ENCODE measurements at regions of chr12 and their contacts with region 1.

Region 1: GRCh38 chr12:8949342-8950220 is at the start of gene M6PR:
- DNase-seq: peak; percentile 96 to 98
- ATAC-seq: peak; percentile 95 to 96
- H3K4me3 ChIP-seq: peak within 1 kb of the TSS; percentile 100
- H3K27ac ChIP-seq: peak within 1 kb of the TSS; percentile 90 to 93
- H3K4me1 ChIP-seq: peaks cover 19% of the 10 kb centered on the region
- CTCF ChIP-seq: peak; percentile 44
- EP300 ChIP-seq: no peak
- POLR2A ChIP-seq: peak; percentile 92
- RAD21 ChIP-seq: peak; percentile 52 to 60; a peak in 4 of 5 replicates
- polyA plus RNA-seq, gene M6PR: 162 and 227 TPM in 2 replicates

Region 2: DNA sequence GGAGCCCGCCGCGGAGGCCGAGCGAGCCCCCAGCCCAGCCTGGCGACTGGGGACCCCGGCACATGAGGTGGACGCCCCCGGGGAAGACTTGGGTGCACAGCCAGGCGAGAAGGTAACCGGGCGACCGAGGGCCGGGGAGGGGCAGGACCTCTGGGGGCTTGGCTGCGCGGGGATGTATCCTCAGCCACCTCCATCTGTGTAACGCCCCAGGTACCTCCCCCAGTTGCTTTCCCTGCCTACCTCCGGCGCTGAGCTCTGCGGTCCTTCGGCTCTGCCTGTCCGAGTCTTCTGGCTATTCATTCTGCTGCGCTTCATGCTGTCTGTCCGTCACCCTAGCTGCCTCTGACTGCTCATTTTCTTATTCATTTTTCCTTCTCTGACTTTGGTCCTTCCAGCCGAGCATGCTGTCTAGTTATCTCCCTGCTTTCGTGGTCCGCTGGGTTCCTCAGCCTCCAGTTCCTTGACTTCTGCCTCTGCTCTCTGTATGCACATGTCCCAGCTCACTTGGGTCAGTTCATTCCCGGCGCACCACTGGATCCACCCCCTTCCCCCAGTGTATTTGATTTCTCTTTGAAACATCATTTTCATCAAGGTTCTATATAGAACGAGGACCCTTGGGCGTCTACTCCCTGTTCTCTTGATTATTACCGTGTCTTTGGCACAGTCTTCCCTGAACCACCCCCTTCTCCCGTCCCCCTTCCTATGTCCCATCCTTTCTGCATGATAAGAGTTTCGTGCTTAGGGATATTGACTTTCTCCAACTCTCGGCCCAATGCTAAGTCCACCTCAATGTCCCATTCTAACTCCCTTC is 34.7 kb before region 1 on chr12:
- CTCF ChIA-PET with region 1: interaction called, 4 read pairs
- POLR2A ChIA-PET with region 1: interaction called, 22 read pairs
- DNase-seq: peak; percentile 70 to 71
- ATAC-seq: peak; percentile 92 to 96
- H3K4me3 ChIP-seq: peak overlapping the region; percentile 50
- H3K27ac ChIP-seq: peak overlapping the region; percentile 83 to 89
- H3K4me1 ChIP-seq: peaks cover 18% of the 10 kb centered on the region
- CTCF ChIP-seq: no peak
- EP300 ChIP-seq: no peak
- POLR2A ChIP-seq: 0 out of 2 replicates have a peak, but pooled peaks have one; percentile 20
- RAD21 ChIP-seq: no peak

Region 3: GRCh38 chr12:9039397-9039977 is 89.9 kb after region 1 on chr12:
- CTCF ChIA-PET with region 1: interaction called, 21 read pairs
- POLR2A ChIA-PET with region 1: no interaction called
- DNase-seq: peak; percentile 58 to 78
- ATAC-seq: peak; percentile 77 to 88; a peak in 4 of 6 replicates
- H3K4me3 ChIP-seq: no peak overlapping the region
- H3K27ac ChIP-seq: no peak overlapping the region
- H3K4me1 ChIP-seq: no peaks in the 10 kb centered on the region
- CTCF ChIP-seq: peak; percentile 82
- EP300 ChIP-seq: no peak
- POLR2A ChIP-seq: no peak
- RAD21 ChIP-seq: peak; percentile 79 to 82

Region 4: DNA sequence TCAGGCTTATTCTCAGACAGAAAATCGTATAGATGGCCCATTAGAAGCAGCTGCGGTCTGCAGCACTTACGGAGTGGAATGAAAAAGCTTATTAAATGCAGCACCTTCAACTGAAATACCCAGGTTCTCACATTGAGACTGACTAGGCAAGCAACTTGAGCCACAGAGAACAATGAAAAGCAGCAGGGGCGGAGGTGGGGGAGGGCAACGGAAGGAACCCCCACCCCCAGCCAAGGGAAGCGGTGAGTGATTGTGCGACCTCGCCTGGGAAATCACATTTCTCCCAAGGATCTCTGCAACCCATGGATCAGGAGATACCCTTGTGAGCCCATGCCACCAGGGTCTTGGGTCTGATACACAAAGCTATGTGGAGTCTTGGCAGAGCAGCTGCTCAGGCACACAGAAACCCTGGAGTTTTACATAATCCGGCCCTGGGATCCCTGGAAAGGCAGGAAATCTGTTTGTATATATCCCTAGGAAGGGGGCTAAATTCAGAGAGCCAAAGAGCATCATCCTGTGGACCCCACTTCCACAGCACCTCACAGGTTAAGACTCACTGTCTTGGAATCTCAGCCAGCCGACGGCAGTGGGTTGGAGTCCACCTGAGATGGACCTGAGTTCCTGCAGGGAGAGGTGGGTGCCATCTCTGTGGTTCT is 220.5 kb after region 1 on chr12:
- CTCF ChIA-PET with region 1: no interaction called
- POLR2A ChIA-PET with region 1: no interaction called
- DNase-seq: no peak
- ATAC-seq: no peak
- H3K4me3 ChIP-seq: no peak overlapping the region
- H3K27ac ChIP-seq: no peak overlapping the region
- H3K4me1 ChIP-seq: no peaks in the 10 kb centered on the region
- CTCF ChIP-seq: no peak
- EP300 ChIP-seq: no peak
- POLR2A ChIP-seq: no peak
- RAD21 ChIP-seq: no peak